Activated T-helper 1 cell treated with anti-CD3 and anti-CD28 coated beads, Interleukin-12 subunit alpha, Interleukin-12 subunit beta, Interleukin-2, Interleukin-4 antibody, amounts not matched to agents 30 ng/mL and 10 ng/mL and 1 ng/mL, durations not matched to agents 14 hours and 24 hours and 36 hours (primary cell): ENCODE measurements at regions of chr11 and their contacts with region 1.

Region 1: GRCh38 chr11:5808500-5809121 is at the start of gene OR52N2:
- DNase-seq: peak; percentile 56
- H3K4me3 Mint-ChIP-seq: peak within 1 kb of the TSS; percentile 85
- H3K27ac Mint-ChIP-seq: no peak within 1 kb of the TSS
- H3K4me1 Mint-ChIP-seq: peaks cover 15% of the 10 kb centered on the region
- H3K27me3 Mint-ChIP-seq: peaks cover 20% of the 10 kb centered on the region
- total RNA-seq, gene OR52N2: not detected in 2 replicates

Region 2: GRCh38 chr11:4636962-4637661 is 1171.5 kb before region 1 on chr11 and contains the start of gene OR51D1:
- intact Hi-C with region 1: loop called (anchors 1 kb)
- DNase-seq: peak; percentile 52
- H3K4me3 Mint-ChIP-seq: no peak within 1 kb of the TSS
- H3K27ac Mint-ChIP-seq: no peak within 1 kb of the TSS
- H3K4me1 Mint-ChIP-seq: no peaks in the 10 kb centered on the region
- H3K27me3 Mint-ChIP-seq: peaks cover 2% of the 10 kb centered on the region
- total RNA-seq, gene OR51D1: not detected in 2 replicates

Region 3: GRCh38 chr11:5380740-5381342 is 427.8 kb before region 1 on chr11:
- intact Hi-C with region 1: loop called (anchors 5 kb)
- DNase-seq: peak; percentile 2
- H3K4me3 Mint-ChIP-seq: no peak overlapping the region
- H3K27ac Mint-ChIP-seq: no peak overlapping the region
- H3K4me1 Mint-ChIP-seq: no peaks in the 10 kb centered on the region
- H3K27me3 Mint-ChIP-seq: no peaks in the 10 kb centered on the region

Region 4: DNA sequence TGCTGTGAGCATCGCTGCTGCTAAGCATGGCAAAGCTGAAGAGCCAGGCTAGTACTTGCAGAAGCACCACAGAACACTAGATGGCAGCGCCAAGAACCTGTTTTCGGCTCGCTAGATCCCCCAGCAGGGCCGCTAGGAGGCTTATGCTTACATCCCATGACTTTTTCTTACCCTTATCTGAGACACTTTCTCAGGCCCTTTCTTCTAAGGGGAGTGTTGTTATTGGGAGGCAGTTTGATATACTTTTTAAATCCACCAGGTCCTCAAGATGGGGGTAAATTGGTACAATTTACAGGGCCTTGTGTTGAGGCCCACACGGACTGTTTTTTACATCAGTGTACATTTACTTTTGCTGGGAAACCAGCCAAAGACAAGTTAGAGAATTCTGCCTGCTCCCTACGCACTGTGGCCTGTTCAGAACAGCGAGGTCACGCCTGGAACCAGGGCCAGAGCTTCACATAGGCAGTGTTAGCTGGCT is 208.2 kb before region 1 on chr11:
- intact Hi-C with region 1: loop called (anchors 1 kb)
- DNase-seq: peak; percentile 45
- H3K4me3 Mint-ChIP-seq: no peak overlapping the region
- H3K27ac Mint-ChIP-seq: no peak overlapping the region
- H3K4me1 Mint-ChIP-seq: peaks cover 11% of the 10 kb centered on the region
- H3K27me3 Mint-ChIP-seq: peaks cover 1% of the 10 kb centered on the region

Region 5: DNA sequence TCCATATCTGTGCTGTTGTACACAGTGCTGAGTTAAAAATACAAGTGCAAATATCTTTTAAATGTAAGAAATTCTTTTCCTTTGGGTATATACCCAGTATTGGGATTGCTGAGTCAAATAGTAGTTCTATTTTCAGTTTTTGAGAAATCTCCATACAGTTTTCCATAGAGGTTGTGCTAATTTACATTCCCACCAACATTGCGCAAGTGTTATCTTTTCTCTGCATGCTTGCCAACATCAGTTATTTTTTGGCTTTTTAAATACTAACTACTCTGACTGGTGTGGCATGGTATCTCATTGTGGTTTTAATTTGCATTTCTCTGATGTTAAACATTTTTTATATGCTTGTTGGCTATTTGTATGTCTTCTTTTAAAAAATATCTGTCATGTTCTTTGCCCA is 42.4 kb after region 1 on chr11:
- intact Hi-C with region 1: no loop called
- DNase-seq: no peak
- H3K4me3 Mint-ChIP-seq: no peak overlapping the region
- H3K27ac Mint-ChIP-seq: no peak overlapping the region
- H3K4me1 Mint-ChIP-seq: no peaks in the 10 kb centered on the region
- H3K27me3 Mint-ChIP-seq: peaks cover 1% of the 10 kb centered on the region

Region 6: DNA sequence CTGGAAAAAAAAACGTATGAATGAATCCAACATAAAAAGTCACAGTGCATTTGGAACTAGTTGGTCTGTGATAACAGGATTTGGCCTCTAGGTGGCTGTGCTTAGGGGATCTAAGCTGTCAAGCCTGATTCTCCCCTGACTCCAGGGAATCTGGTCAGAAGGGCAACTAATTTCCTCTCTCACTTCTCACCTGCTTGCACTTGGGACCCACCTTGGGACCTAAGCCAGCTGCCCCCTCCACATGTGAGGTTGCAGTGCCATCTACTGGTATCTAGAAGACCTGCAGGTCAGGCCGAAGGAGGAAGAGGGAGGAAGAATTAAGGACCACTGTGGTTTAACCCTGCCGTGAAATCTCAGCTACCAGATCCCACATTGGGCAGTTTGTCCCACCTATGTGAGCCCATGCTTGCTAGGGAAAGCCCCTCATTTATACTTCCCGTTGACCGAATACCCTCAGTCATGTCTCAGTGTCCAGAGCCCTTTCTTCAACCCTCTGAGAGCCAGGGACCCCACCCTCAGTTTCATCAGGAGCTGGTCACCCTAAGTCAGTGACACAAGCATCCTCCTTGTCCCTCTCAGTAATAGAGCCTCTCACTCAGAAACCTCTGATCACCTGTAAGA is 544.9 kb after region 1 on chr11:
- intact Hi-C with region 1: loop called (anchors 10 kb)
- DNase-seq: peak; percentile 47
- H3K4me3 Mint-ChIP-seq: no peak overlapping the region
- H3K27ac Mint-ChIP-seq: no peak overlapping the region
- H3K4me1 Mint-ChIP-seq: peaks cover 12% of the 10 kb centered on the region
- H3K27me3 Mint-ChIP-seq: no peaks in the 10 kb centered on the region